ENCODE measurements at regions of chr15 and their contacts with region 1.

Region 1: GRCh38 chr15:67109141-67110034 is 44.0 kb downstream of the SMAD3 start:
- DNase-seq: peak; percentile 97
- H3K4me3 ChIP-seq: no peak overlapping the region
- H3K27ac ChIP-seq: peak overlapping the region; percentile 98
- H3K27me3 ChIP-seq: no peaks in the 10 kb centered on the region
- CTCF ChIP-seq: no peak

Region 2: DNA sequence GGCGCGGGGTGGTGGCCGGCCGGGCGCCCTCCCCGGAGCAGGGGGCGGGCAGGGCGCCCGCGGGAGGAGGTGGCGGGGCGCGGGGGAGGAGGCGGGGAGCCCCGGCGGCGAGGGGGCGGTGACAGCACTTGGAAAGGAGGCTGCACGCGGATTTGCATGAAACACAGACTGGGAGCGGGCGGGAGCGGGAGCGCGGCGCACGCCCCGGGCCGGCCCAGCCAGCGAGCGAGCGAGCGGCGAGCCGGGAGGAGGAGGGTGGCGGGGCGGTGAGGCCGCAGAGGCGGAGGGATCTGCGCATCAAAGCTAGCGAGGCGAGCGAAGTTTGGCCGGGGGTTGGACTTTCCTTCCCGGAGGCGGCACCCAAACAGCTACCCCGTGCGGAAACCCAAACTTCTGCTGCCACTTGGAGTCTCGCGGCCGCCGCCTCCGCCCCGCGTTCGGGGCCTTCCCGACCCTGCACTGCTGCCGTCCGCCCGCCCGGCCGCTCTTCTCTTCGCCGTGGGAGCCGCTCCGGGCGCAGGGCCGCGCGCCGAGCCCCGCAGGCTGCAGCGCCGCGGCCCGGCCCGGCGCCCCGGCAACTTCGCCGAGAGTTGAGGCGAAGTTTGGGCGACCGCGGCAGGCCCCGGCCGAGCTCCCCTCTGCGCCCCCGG is 43.8 kb before region 1 on chr15 and contains the start of gene SMAD3:
- CTCF ChIA-PET with region 1: no interaction called
- POLR2A ChIA-PET with region 1: interaction called, 12 read pairs
- DNase-seq: peak; percentile 91
- H3K4me3 ChIP-seq: peak within 1 kb of the TSS; percentile 99
- H3K27ac ChIP-seq: peak within 1 kb of the TSS; percentile 83
- H3K27me3 ChIP-seq: no peaks in the 10 kb centered on the region
- CTCF ChIP-seq: no peak
- polyA plus RNA-seq, gene SMAD3: 115 and 138 TPM in 2 replicates

Region 3: GRCh38 chr15:67125589-67126502 is 16.5 kb after region 1 on chr15:
- CTCF ChIA-PET with region 1: interaction called, 4 read pairs
- POLR2A ChIA-PET with region 1: interaction called, 17 read pairs
- DNase-seq: peak; percentile 98
- H3K4me3 ChIP-seq: peak overlapping the region; percentile 54
- H3K27ac ChIP-seq: peak overlapping the region; percentile 98
- H3K27me3 ChIP-seq: no peaks in the 10 kb centered on the region
- CTCF ChIP-seq: no peak

Region 4: DNA sequence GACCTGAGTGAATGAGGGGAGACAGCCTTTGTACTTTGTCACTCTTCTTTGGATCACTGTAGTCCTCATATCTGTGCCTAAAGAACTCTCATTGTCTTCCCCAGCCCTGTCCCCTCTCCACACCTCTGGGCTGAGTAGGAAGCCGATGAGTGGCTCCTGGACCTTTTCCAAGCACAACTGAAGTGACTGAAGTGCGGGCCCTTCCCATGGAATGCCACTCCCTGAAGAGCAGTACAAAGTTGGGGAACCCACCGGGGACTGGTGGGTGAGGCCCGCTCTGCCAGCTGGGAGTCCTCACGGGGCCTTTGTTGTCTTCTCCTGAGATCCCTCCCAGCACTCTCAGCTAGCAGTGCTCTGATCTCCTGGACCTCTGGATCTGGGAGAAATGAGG is 55.0 kb after region 1 on chr15:
- CTCF ChIA-PET with region 1: no interaction called
- POLR2A ChIA-PET with region 1: interaction called, 12 read pairs
- DNase-seq: no peak
- H3K4me3 ChIP-seq: no peak overlapping the region
- H3K27ac ChIP-seq: peak overlapping the region; percentile 96
- H3K27me3 ChIP-seq: no peaks in the 10 kb centered on the region
- CTCF ChIP-seq: no peak

Region 5: GRCh38 chr15:67178569-67179210 is 69.3 kb after region 1 on chr15:
- CTCF ChIA-PET with region 1: no interaction called
- POLR2A ChIA-PET with region 1: interaction called, 12 read pairs
- DNase-seq: peak; percentile 97
- H3K4me3 ChIP-seq: no peak overlapping the region
- H3K27ac ChIP-seq: peak overlapping the region; percentile 98
- H3K27me3 ChIP-seq: no peaks in the 10 kb centered on the region
- CTCF ChIP-seq: no peak

Region 6: GRCh38 chr15:67372543-67372942 is 263.2 kb after region 1 on chr15:
- CTCF ChIA-PET with region 1: no interaction called
- POLR2A ChIA-PET with region 1: no interaction called
- DNase-seq: no peak
- H3K4me3 ChIP-seq: no peak overlapping the region
- H3K27ac ChIP-seq: no peak overlapping the region
- H3K27me3 ChIP-seq: peaks cover 6% of the 10 kb centered on the region
- CTCF ChIP-seq: no peak